CD8-positive, alpha-beta T cell (primary cell): ENCODE measurements at regions of chr13 and their contacts with region 1.

Region 1: GRCh38 chr13:51380269-51380668 is 40.8 kb downstream of the SERPINE3 start:
- DNase-seq: no peak
- ATAC-seq: no peak
- H3K4me3 ChIP-seq: no peak overlapping the region
- H3K4me3 Mint-ChIP-seq: no peak overlapping the region
- H3K27ac ChIP-seq: no peak overlapping the region
- H3K27ac Mint-ChIP-seq: no peak overlapping the region
- H3K4me1 ChIP-seq: no peaks in the 10 kb centered on the region
- H3K4me1 Mint-ChIP-seq: no peaks in the 10 kb centered on the region
- H3K27me3 ChIP-seq: no peaks in the 10 kb centered on the region
- H3K27me3 Mint-ChIP-seq: no peaks in the 10 kb centered on the region
- CTCF ChIP-seq: no peak

Region 2: GRCh38 chr13:51262501-51263211 is 117.6 kb before region 1 on chr13:
- CTCF ChIA-PET with region 1: no interaction called
- POLR2A ChIA-PET with region 1: no interaction called
- intact Hi-C with region 1: no loop called
- DNase-seq: no peak
- ATAC-seq: no peak
- H3K4me3 ChIP-seq: no peak overlapping the region
- H3K4me3 Mint-ChIP-seq: no peak overlapping the region
- H3K27ac ChIP-seq: no peak overlapping the region
- H3K27ac Mint-ChIP-seq: no peak overlapping the region
- H3K4me1 ChIP-seq: no peaks in the 10 kb centered on the region
- H3K4me1 Mint-ChIP-seq: no peaks in the 10 kb centered on the region
- H3K27me3 ChIP-seq: no peaks in the 10 kb centered on the region
- H3K27me3 Mint-ChIP-seq: no peaks in the 10 kb centered on the region
- CTCF ChIP-seq: no peak

Region 3: GRCh38 chr13:51363625-51364024 is 16.6 kb before region 1 on chr13:
- CTCF ChIA-PET with region 1: no interaction called
- POLR2A ChIA-PET with region 1: no interaction called
- intact Hi-C with region 1: loop called in 1 of 2 experiments (anchors 2 kb)
- DNase-seq: no peak
- ATAC-seq: no peak
- H3K4me3 ChIP-seq: no peak overlapping the region
- H3K4me3 Mint-ChIP-seq: no peak overlapping the region
- H3K27ac ChIP-seq: no peak overlapping the region
- H3K27ac Mint-ChIP-seq: peak overlapping the region; percentile 4
- H3K4me1 ChIP-seq: no peaks in the 10 kb centered on the region
- H3K4me1 Mint-ChIP-seq: no peaks in the 10 kb centered on the region
- H3K27me3 ChIP-seq: no peaks in the 10 kb centered on the region
- H3K27me3 Mint-ChIP-seq: no peaks in the 10 kb centered on the region
- CTCF ChIP-seq: no peak

Region 4: DNA sequence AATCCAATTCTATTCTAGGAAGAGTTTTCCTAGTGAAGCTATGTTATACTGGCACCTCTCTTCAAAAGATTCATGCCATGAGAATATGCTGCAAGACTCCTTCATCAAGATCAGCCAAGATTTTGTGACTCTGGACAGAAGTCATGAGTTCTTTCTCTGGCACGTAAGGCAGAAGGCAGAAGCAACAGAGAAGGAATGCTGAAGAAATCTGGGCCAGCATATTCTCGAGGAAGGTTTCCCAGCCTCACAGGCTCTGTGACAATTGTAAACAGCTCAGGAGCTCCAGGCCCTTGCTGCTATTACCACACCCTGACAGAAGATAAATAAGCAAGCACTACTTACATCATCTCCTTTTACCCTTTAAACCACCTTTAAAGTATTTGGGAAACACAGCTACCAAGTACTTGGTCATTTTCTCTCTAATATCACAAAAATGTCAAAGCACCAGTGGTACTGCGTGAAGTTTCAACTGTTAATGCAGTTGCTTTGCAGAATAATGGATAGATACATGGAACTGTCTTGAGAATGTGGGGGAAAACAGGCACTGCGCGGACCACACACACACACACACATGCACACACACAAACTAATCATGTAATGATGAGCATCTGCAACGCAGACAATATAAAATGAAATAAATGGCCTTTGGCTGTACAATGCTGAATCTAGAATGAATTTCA is 17.1 kb after region 1 on chr13:
- CTCF ChIA-PET with region 1: no interaction called
- POLR2A ChIA-PET with region 1: no interaction called
- intact Hi-C with region 1: no loop called
- DNase-seq: no peak
- ATAC-seq: no peak
- H3K4me3 ChIP-seq: no peak overlapping the region
- H3K4me3 Mint-ChIP-seq: no peak overlapping the region
- H3K27ac ChIP-seq: no peak overlapping the region
- H3K27ac Mint-ChIP-seq: peak overlapping the region; percentile 9
- H3K4me1 ChIP-seq: peaks cover 3% of the 10 kb centered on the region
- H3K4me1 Mint-ChIP-seq: peaks cover 53% of the 10 kb centered on the region
- H3K27me3 ChIP-seq: no peaks in the 10 kb centered on the region
- H3K27me3 Mint-ChIP-seq: no peaks in the 10 kb centered on the region
- CTCF ChIP-seq: no peak

Region 5: DNA sequence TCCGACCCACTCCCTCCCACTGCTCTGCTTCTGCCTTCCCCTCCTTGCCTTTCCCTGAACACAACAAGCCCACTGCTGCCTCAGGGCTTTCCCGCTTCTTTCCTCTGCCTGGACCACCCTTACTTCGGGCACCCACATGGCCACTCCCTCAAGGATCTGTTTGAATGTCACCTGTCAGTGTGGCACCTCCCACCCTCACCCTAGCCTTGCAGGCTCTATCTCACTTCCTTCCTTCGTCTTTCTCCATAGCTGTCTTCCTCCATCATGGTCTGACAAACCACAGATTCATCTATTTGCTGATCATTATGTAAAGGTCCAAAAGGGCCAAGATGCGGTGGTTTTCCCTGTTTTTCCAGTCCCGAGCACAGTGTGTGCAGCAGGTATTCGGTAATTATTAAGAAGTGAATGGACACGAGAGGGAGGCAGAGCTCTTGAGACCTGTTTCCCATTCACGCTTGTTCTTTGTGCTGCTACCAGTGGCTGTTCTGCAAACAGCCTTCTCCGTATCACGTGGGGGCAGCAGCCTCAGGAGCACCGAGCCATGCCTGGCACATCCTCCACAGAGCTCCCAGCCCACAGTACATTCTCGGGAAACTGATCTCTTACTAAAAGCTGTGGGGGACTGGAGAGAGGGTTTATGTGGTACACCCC is 531.7 kb after region 1 on chr13:
- CTCF ChIA-PET with region 1: no interaction called
- POLR2A ChIA-PET with region 1: no interaction called
- intact Hi-C with region 1: no loop called
- DNase-seq: no peak
- ATAC-seq: no peak
- H3K4me3 ChIP-seq: no peak overlapping the region
- H3K4me3 Mint-ChIP-seq: no peak overlapping the region
- H3K27ac ChIP-seq: no peak overlapping the region
- H3K27ac Mint-ChIP-seq: no peak overlapping the region
- H3K4me1 ChIP-seq: no peaks in the 10 kb centered on the region
- H3K4me1 Mint-ChIP-seq: peaks cover 5% of the 10 kb centered on the region
- H3K27me3 ChIP-seq: no peaks in the 10 kb centered on the region
- H3K27me3 Mint-ChIP-seq: no peaks in the 10 kb centered on the region
- CTCF ChIP-seq: no peak